ENCODE measurements at regions of chr19 and their contacts with region 1.

Region 1: DNA sequence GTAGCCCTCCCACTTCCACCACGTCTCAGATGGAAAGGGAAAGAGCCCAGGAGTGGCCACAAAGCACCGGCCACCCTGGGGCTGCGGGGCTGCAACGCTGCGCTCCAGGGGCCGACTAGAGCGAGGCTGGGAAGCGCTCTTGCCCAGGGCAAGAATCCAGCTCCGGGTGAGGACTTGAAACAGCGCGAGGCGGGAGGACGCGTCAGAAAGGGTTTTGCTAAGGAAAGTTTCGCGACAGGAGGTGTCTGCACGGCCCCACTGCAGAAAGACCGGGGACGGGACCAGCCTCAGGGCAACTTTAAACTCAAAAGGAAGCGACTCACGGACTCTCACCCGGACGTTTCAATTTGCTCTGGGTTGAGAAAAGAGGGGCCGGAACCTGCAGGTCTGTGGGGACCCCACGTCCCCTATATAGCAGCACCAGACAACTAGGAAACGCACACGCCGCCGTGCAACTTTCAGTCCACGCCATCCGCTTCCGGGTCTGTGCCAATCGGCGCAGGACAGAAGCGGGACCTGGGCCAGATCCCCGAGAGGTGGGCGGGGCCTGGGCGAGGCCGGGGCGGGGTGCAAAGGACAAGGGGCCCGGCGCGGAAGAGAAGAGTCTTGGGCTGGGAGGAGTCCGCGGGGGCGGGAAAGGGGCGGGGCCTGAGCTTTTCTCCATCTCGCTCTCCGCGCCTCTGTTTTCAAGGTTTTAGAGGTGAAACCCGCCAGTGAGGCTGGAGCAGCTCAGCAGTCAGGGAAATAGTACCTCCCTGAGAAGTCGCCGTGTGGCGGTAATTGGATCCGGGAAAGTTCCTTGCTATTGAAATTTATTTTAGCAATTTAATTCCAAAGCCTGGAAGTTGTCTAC is at the start of gene ZNF816:
- DNase-seq: peak; percentile 100
- ATAC-seq: peak; percentile 100
- H3K4me3 Mint-ChIP-seq: peak within 1 kb of the TSS; percentile 96
- H3K27ac Mint-ChIP-seq: peak within 1 kb of the TSS; percentile 96
- H3K4me1 Mint-ChIP-seq: peaks cover 26% of the 10 kb centered on the region
- H3K27me3 Mint-ChIP-seq: no peaks in the 10 kb centered on the region
- total RNA-seq, gene ZNF816: 10.7 to 11.4 TPM

Region 2: DNA sequence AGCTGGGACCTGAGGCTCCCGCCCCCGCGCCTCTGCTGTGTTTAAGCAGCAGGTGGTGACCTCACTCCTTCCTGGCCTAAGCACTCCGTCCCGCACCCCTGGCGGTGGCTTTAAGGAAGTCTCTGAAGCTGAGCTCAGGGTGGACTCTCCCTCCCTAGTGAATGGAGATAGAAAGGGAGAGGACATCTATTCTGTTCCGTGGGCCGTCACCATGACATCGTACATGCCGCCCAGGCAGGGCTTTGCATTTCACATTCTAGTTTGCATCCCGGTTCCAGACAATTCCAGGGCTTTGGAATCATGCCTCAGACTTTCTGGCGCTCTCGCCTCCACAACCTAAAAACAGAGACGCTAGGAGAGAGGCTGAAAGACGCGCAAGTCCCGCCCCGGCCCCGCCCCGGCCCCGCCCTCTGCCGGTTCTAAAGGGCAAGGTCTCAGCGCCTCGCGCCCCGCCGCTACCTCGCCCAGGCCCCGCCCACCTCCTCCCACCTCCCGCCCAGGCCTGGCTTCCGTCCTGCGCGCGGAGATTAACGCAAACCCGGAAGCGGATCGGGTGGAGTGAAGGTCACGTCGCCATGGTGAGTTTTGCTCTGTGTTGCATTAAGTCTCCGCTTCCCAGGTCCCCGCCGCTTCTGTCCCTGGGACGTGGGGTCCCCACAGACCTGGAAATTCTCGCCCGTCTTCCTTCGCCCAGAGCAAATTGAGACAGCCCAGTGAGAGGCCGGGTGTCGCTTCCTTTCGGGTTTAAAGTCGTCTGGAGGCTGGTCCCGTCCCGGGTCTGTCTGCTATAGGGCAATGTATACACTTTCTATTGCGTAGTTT is 435.3 kb before region 1 on chr19 and contains the start of gene ZNF808:
- CTCF ChIA-PET with region 1: no interaction called
- POLR2A ChIA-PET with region 1: no interaction called
- intact Hi-C with region 1: loop called in 1 of 2 experiments (anchors 5 kb)
- DNase-seq: peak; percentile 99
- ATAC-seq: peak; percentile 92
- H3K4me3 Mint-ChIP-seq: peak within 1 kb of the TSS; percentile 91
- H3K27ac Mint-ChIP-seq: peak within 1 kb of the TSS; percentile 94
- H3K4me1 Mint-ChIP-seq: peaks cover 23% of the 10 kb centered on the region
- H3K27me3 Mint-ChIP-seq: no peaks in the 10 kb centered on the region
- total RNA-seq, gene ZNF808: 25.7 to 29.9 TPM

Region 3: GRCh38 chr19:52786457-52787359 is 175.9 kb before region 1 on chr19 and contains the start of gene ZNF600:
- CTCF ChIA-PET with region 1: no interaction called
- POLR2A ChIA-PET with region 1: no interaction called
- intact Hi-C with region 1: loop called in 1 of 2 experiments (anchors 1 kb)
- DNase-seq: peak; percentile 83
- ATAC-seq: peak; percentile 99
- H3K4me3 Mint-ChIP-seq: peak within 1 kb of the TSS; percentile 87
- H3K27ac Mint-ChIP-seq: peak within 1 kb of the TSS; percentile 84
- H3K4me1 Mint-ChIP-seq: peaks cover 23% of the 10 kb centered on the region
- H3K27me3 Mint-ChIP-seq: no peaks in the 10 kb centered on the region
- total RNA-seq, gene ZNF600: 10.6 to 14.3 TPM

Region 4: GRCh38 chr19:52897144-52897935 is 65.3 kb before region 1 on chr19 and contains the start of gene ZNF320:
- CTCF ChIA-PET with region 1: no interaction called
- POLR2A ChIA-PET with region 1: no interaction called
- intact Hi-C with region 1: loop called (anchors 1 to 2 kb)
- DNase-seq: peak; percentile 98
- ATAC-seq: peak; percentile 100
- H3K4me3 Mint-ChIP-seq: peak within 1 kb of the TSS; percentile 88
- H3K27ac Mint-ChIP-seq: peak within 1 kb of the TSS; percentile 93
- H3K4me1 Mint-ChIP-seq: peaks cover 31% of the 10 kb centered on the region
- H3K27me3 Mint-ChIP-seq: no peaks in the 10 kb centered on the region
- total RNA-seq, gene ZNF320: 10.8 to 12.2 TPM

Region 5: GRCh38 chr19:52993323-52994178 is 30.9 kb after region 1 on chr19:
- CTCF ChIA-PET with region 1: no interaction called
- POLR2A ChIA-PET with region 1: no interaction called
- intact Hi-C with region 1: loop called in 1 of 2 experiments (anchors 1 kb)
- DNase-seq: peak; percentile 88
- ATAC-seq: peak; percentile 88
- H3K4me3 Mint-ChIP-seq: peak overlapping the region; percentile 72
- H3K27ac Mint-ChIP-seq: no peak overlapping the region
- H3K4me1 Mint-ChIP-seq: peaks cover 15% of the 10 kb centered on the region
- H3K27me3 Mint-ChIP-seq: peaks cover 9% of the 10 kb centered on the region

Region 6: GRCh38 chr19:53007611-53008010 is 45.0 kb after region 1 on chr19:
- CTCF ChIA-PET with region 1: no interaction called
- POLR2A ChIA-PET with region 1: no interaction called
- intact Hi-C with region 1: no loop called
- DNase-seq: no peak
- ATAC-seq: peak; percentile 26
- H3K4me3 Mint-ChIP-seq: no peak overlapping the region
- H3K27ac Mint-ChIP-seq: no peak overlapping the region
- H3K4me1 Mint-ChIP-seq: no peaks in the 10 kb centered on the region
- H3K27me3 Mint-ChIP-seq: no peaks in the 10 kb centered on the region

Region 7: GRCh38 chr19:53867225-53868090 is 904.8 kb after region 1 on chr19 and contains the start of gene MYADM:
- CTCF ChIA-PET with region 1: no interaction called
- POLR2A ChIA-PET with region 1: no interaction called
- intact Hi-C with region 1: loop called in 1 of 2 experiments (anchors 5 kb)
- DNase-seq: peak; percentile 99
- ATAC-seq: peak; percentile 71
- H3K4me3 Mint-ChIP-seq: peak within 1 kb of the TSS; percentile 91
- H3K27ac Mint-ChIP-seq: peak within 1 kb of the TSS; percentile 88
- H3K4me1 Mint-ChIP-seq: peaks cover 32% of the 10 kb centered on the region
- H3K27me3 Mint-ChIP-seq: no peaks in the 10 kb centered on the region
- total RNA-seq, gene MYADM: 46.4 to 54.6 TPM

Measured in activated CD4-positive, alpha-beta T cell treated with anti-CD3 and anti-CD28 coated beads for 36 hours (primary cell).